ENCODE measurements at regions of chr6 and their contacts with region 1.

Region 1: GRCh38 chr6:16591396-16592222 is 169.7 kb downstream of the ATXN1 start:
- DNase-seq: no peak
- H3K4me3 ChIP-seq: no peak overlapping the region
- H3K27ac ChIP-seq: no peak overlapping the region
- H3K4me1 ChIP-seq: peaks cover 6% of the 10 kb centered on the region
- H3K27me3 ChIP-seq: no peaks in the 10 kb centered on the region
- CTCF ChIP-seq: no peak
- EP300 ChIP-seq: no peak
- POLR2A ChIP-seq: no peak

Region 2: DNA sequence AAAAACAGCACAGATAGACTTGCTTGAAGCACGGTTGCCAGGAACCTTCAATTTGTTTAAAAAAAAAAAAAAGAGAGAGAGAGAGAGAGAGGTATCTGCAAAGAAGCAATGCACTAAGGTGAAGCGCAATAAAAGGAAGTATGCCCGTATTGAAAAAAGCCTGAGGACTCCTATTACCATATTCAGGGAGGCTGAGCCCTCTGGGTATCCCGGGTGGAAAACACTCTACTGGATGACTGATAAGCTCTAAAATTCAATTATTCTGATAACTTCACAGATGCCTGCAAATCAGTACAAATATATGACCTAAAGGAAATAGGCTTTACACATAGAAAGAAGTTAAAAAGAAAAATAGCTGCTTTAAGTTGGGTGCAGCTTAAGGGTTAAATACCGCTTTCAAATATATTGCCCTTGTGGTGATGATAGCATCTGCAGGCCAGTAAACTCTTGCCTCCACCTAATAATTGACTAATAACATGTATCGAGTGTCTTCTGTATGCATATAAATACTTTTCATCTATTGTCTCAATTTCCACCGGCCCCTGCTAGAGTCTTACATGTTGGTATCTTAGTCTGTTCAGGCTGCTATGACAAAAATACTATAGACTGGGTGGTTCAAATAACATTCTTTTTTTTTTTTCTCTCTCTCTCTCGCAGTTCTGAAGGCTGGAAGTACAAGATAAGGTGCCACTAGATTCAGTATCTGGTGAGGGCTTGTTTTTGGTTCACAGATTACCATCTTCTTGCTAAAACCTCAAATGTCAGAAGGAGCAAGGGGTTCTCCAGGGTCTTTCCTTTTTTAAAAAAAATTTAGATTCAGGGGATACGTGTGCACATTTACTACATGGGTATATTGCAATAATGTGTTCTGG is 1533.2 kb before region 1 on chr6:
- intact Hi-C with region 1: loop called in 1 of 4 experiments (anchors 10 kb)
- DNase-seq: no peak
- H3K4me3 ChIP-seq: no peak overlapping the region
- H3K27ac ChIP-seq: no peak overlapping the region
- H3K4me1 ChIP-seq: no peaks in the 10 kb centered on the region
- H3K27me3 ChIP-seq: no peaks in the 10 kb centered on the region
- CTCF ChIP-seq: no peak
- EP300 ChIP-seq: no peak
- POLR2A ChIP-seq: no peak

Region 3: GRCh38 chr6:15691250-15691869 is 900.2 kb before region 1 on chr6:
- intact Hi-C with region 1: no loop called
- DNase-seq: peak; percentile 82 to 88 (median 84)
- H3K4me3 ChIP-seq: peak overlapping the region; percentile 26
- H3K27ac ChIP-seq: no peak overlapping the region
- H3K4me1 ChIP-seq: no peaks in the 10 kb centered on the region
- H3K27me3 ChIP-seq: no peaks in the 10 kb centered on the region
- CTCF ChIP-seq: peak; percentile 95 to 99 (median 97)
- EP300 ChIP-seq: no peak
- POLR2A ChIP-seq: no peak

Region 4: GRCh38 chr6:16568128-16568527 is 23.5 kb before region 1 on chr6:
- intact Hi-C with region 1: loop called in 1 of 4 experiments (anchors 1 kb)
- DNase-seq: no peak
- H3K4me3 ChIP-seq: no peak overlapping the region
- H3K27ac ChIP-seq: no peak overlapping the region
- H3K4me1 ChIP-seq: no peaks in the 10 kb centered on the region
- H3K27me3 ChIP-seq: no peaks in the 10 kb centered on the region
- CTCF ChIP-seq: no peak
- EP300 ChIP-seq: no peak
- POLR2A ChIP-seq: no peak